ENCODE measurements at regions of chr20 and their contacts with region 1.

Region 1: DNA sequence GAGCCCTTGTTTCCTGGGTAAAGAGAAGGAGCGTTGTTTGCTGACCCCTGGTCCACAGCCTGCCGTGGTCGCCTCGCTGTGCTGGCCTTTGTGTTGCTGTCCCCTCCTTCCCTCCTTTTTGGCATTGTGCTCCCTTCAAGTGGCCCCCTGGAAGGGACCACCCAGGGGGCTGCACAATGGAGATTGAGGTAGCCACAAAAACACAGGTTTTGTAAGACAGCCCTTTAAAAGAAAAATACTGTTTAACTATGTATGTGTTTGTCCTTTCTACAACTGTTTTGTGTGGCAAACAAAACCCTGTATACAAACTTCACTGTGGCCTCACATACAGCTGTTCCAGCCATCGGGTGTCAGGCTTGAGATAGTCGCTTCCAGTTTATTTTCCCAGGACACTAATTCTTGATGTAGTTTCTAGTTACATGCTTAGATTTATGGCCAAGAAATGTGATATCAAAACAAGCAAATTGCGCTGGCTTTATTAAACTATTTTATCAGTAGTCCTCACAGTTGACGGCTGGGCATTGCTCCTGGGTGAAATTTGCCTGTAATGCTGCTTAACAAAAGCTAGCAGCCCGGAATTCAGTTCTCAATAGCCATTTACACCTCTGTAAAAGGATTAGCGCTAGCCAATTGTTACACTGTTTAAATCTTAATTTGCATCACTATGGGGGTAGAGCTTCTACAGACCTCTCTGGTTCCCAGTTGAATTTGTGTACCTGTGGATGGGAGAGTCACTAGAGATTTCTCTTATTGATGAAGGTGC is 64.1 kb downstream of the KIZ start:
- DNase-seq: peak; percentile 51
- ATAC-seq: peak; percentile 84
- H3K4me3 Mint-ChIP-seq: peak overlapping the region; percentile 66
- H3K27ac Mint-ChIP-seq: peak overlapping the region; percentile 99
- H3K4me1 Mint-ChIP-seq: peaks cover 72% of the 10 kb centered on the region
- H3K27me3 Mint-ChIP-seq: no peaks in the 10 kb centered on the region
- CTCF ChIP-seq: no peak

Region 2: GRCh38 chr20:20869161-20869775 is 320.7 kb before region 1 on chr20:
- CTCF ChIA-PET with region 1: no interaction called
- POLR2A ChIA-PET with region 1: interaction called, 10 read pairs
- DNase-seq: no peak
- ATAC-seq: no peak
- H3K4me3 Mint-ChIP-seq: no peak overlapping the region
- H3K27ac Mint-ChIP-seq: no peak overlapping the region
- H3K4me1 Mint-ChIP-seq: no peaks in the 10 kb centered on the region; the same call in 1 of the 2 replicates
- H3K27me3 Mint-ChIP-seq: no peaks in the 10 kb centered on the region
- CTCF ChIP-seq: no peak

Region 3: GRCh38 chr20:21202284-21202683 is 12.3 kb after region 1 on chr20:
- CTCF ChIA-PET with region 1: no interaction called
- POLR2A ChIA-PET with region 1: no interaction called
- DNase-seq: no peak
- ATAC-seq: no peak
- H3K4me3 Mint-ChIP-seq: no peak overlapping the region
- H3K27ac Mint-ChIP-seq: peak overlapping the region; percentile 61; the same call in 1 of the 2 replicates
- H3K4me1 Mint-ChIP-seq: peaks cover 45% of the 10 kb centered on the region
- H3K27me3 Mint-ChIP-seq: no peaks in the 10 kb centered on the region; the same call in 1 of the 2 replicates
- CTCF ChIP-seq: no peak

Region 4: DNA sequence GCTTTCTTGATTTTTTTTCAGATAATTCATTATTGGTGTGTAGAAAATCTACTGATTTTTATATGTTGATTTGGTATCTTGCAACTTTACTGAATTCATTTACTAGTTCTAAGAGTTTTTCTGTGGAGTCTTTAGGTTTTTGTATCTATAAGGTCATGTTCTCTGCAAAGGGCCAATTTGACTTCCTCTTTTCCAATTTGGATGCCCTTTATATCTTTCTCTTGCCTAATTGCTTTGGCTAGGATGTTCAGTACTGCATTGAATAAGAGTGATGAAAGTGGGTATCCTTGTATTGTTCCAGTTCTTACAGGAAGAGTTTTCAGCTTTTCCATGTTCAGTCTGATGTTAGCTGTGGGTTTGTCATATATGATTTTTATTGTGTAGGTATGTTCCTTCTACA is 221.8 kb after region 1 on chr20:
- CTCF ChIA-PET with region 1: no interaction called
- POLR2A ChIA-PET with region 1: no interaction called
- DNase-seq: no peak
- ATAC-seq: no peak
- H3K4me3 Mint-ChIP-seq: no peak overlapping the region
- H3K27ac Mint-ChIP-seq: no peak overlapping the region
- H3K4me1 Mint-ChIP-seq: no peaks in the 10 kb centered on the region
- H3K27me3 Mint-ChIP-seq: peaks cover 21% of the 10 kb centered on the region
- CTCF ChIP-seq: no peak

Measured in WTC11 (cell line).